CD4-positive, alpha-beta T cell (primary cell): ENCODE measurements at regions of chr1 and their contacts with region 1.

Region 1: GRCh38 chr1:201023517-201023902 is at the start of gene KIF21B:
- DNase-seq: peak; percentile 79 to 95 (median 90)
- ATAC-seq: peak; percentile 78
- H3K4me3 ChIP-seq: peak within 1 kb of the TSS; percentile 67
- H3K4me3 Mint-ChIP-seq: peak within 1 kb of the TSS; percentile 94
- H3K27ac ChIP-seq: peak within 1 kb of the TSS; percentile 80 to 90
- H3K27ac Mint-ChIP-seq: peak within 1 kb of the TSS; percentile 90
- H3K4me1 ChIP-seq: peaks cover 72% of the 10 kb centered on the region
- H3K4me1 Mint-ChIP-seq: peaks cover 77% of the 10 kb centered on the region
- H3K27me3 ChIP-seq: no peaks in the 10 kb centered on the region
- H3K27me3 Mint-ChIP-seq: no peaks in the 10 kb centered on the region
- CTCF ChIP-seq: no peak
- total RNA-seq, gene KIF21B: 64.5 to 65.4 TPM

Region 2: GRCh38 chr1:200620273-200621131 is 403.0 kb before region 1 on chr1 and contains the start of gene KIF14:
- CTCF ChIA-PET with region 1: no interaction called
- POLR2A ChIA-PET with region 1: interaction called, 3 read pairs
- intact Hi-C with region 1: loop called in 1 of 2 experiments (anchors 5 kb)
- DNase-seq: peak; percentile 78 to 95 (median 88)
- ATAC-seq: peak; percentile 95
- H3K4me3 ChIP-seq: peak within 1 kb of the TSS; percentile 83
- H3K4me3 Mint-ChIP-seq: peak within 1 kb of the TSS; percentile 98
- H3K27ac ChIP-seq: peak within 1 kb of the TSS; percentile 23 to 52
- H3K27ac Mint-ChIP-seq: peak within 1 kb of the TSS; percentile 90
- H3K4me1 ChIP-seq: peaks cover 19% of the 10 kb centered on the region
- H3K4me1 Mint-ChIP-seq: peaks cover 31% of the 10 kb centered on the region
- H3K27me3 ChIP-seq: no peaks in the 10 kb centered on the region
- H3K27me3 Mint-ChIP-seq: no peaks in the 10 kb centered on the region
- CTCF ChIP-seq: no peak
- total RNA-seq, gene KIF14: 0.11 TPM

Region 3: GRCh38 chr1:200684015-200684414 is 339.5 kb before region 1 on chr1:
- CTCF ChIA-PET with region 1: no interaction called
- POLR2A ChIA-PET with region 1: no interaction called
- intact Hi-C with region 1: no loop called
- DNase-seq: no peak
- ATAC-seq: no peak
- H3K4me3 ChIP-seq: no peak overlapping the region
- H3K4me3 Mint-ChIP-seq: no peak overlapping the region
- H3K27ac ChIP-seq: no peak overlapping the region
- H3K27ac Mint-ChIP-seq: no peak overlapping the region
- H3K4me1 ChIP-seq: no peaks in the 10 kb centered on the region
- H3K4me1 Mint-ChIP-seq: no peaks in the 10 kb centered on the region
- H3K27me3 ChIP-seq: no peaks in the 10 kb centered on the region
- H3K27me3 Mint-ChIP-seq: peaks cover 4% of the 10 kb centered on the region
- CTCF ChIP-seq: no peak

Region 4: GRCh38 chr1:200738740-200739498 is 284.6 kb before region 1 on chr1 and contains the start of gene CAMSAP2:
- CTCF ChIA-PET with region 1: no interaction called
- POLR2A ChIA-PET with region 1: no interaction called
- intact Hi-C with region 1: loop called in 1 of 2 experiments (anchors 5 kb)
- DNase-seq: peak; percentile 30 to 90 (median 60)
- ATAC-seq: peak; percentile 67
- H3K4me3 ChIP-seq: peak within 1 kb of the TSS; percentile 93
- H3K4me3 Mint-ChIP-seq: peak within 1 kb of the TSS; percentile 100
- H3K27ac ChIP-seq: peak within 1 kb of the TSS; percentile 29 to 36
- H3K27ac Mint-ChIP-seq: peak within 1 kb of the TSS; percentile 90
- H3K4me1 ChIP-seq: peaks cover 17% of the 10 kb centered on the region
- H3K4me1 Mint-ChIP-seq: peaks cover 46% of the 10 kb centered on the region
- H3K27me3 ChIP-seq: no peaks in the 10 kb centered on the region
- H3K27me3 Mint-ChIP-seq: no peaks in the 10 kb centered on the region
- CTCF ChIP-seq: no peak
- total RNA-seq, gene CAMSAP2: 4.4 to 5.7 TPM

Region 5: GRCh38 chr1:201036188-201036842 is 12.8 kb after region 1 on chr1:
- CTCF ChIA-PET with region 1: interaction called, 4 read pairs
- POLR2A ChIA-PET with region 1: interaction called, 22 read pairs
- intact Hi-C with region 1: no loop called
- DNase-seq: no peak
- ATAC-seq: no peak
- H3K4me3 ChIP-seq: no peak overlapping the region
- H3K4me3 Mint-ChIP-seq: no peak overlapping the region
- H3K27ac ChIP-seq: no peak overlapping the region
- H3K27ac Mint-ChIP-seq: no peak overlapping the region
- H3K4me1 ChIP-seq: no peaks in the 10 kb centered on the region
- H3K4me1 Mint-ChIP-seq: no peaks in the 10 kb centered on the region
- H3K27me3 ChIP-seq: no peaks in the 10 kb centered on the region
- H3K27me3 Mint-ChIP-seq: no peaks in the 10 kb centered on the region
- CTCF ChIP-seq: no peak

Region 6: DNA sequence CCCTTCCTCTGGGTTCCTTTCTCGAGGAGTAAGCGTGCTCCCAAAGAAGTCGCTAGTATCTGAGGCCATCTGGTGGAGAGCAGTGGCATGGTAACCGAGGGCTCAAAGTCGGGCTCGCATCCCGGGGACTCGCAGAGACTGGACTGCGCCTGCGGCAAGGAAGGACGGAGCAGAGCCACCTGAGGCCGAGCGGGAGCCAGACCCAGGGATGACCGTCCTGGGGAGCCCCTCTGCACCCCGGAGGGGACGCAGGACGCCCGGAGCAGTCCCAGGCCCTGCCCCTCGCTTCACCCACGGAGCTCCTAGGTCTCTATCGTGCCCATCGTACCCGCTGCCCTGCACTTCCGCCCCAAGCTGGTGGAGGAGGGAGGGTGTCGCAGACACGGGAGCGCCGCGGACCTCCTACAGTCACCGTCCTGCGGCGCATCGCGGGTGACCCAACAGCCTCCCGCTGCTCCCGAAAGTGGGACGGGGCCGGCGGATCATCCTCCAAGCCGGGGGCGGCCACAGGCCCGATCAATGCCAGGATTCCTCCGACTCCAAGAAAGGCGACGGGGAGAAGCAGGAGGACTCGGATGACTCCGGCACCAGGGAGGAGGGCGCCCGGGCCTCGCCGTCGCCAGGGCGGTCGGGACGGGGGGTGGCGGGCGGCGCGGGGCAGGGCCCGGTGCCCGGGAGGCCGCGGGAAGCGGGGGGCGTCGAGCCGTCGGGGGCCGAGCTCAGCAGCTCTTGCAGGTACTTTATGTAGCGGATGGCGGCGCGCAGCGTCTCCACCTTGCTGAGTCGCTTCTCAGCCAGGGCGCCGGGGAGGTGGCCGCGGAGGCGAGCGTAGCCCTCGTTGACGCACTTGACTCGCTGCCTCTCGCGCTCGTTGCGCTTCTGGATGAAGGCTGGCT is 91.0 kb after region 1 on chr1:
- CTCF ChIA-PET with region 1: interaction called, 5 read pairs
- POLR2A ChIA-PET with region 1: interaction called, 8 read pairs
- intact Hi-C with region 1: loop called in 1 of 2 experiments (anchors 10 kb)
- DNase-seq: peak; percentile 45 to 86 (median 64)
- ATAC-seq: peak; percentile 87
- H3K4me3 ChIP-seq: peak overlapping the region; percentile 84
- H3K4me3 Mint-ChIP-seq: peak overlapping the region; percentile 95
- H3K27ac ChIP-seq: peak overlapping the region; percentile 13 to 32
- H3K27ac Mint-ChIP-seq: peak overlapping the region; percentile 76
- H3K4me1 ChIP-seq: peaks cover 16% of the 10 kb centered on the region
- H3K4me1 Mint-ChIP-seq: peaks cover 30% of the 10 kb centered on the region
- H3K27me3 ChIP-seq: no peaks in the 10 kb centered on the region
- H3K27me3 Mint-ChIP-seq: no peaks in the 10 kb centered on the region
- CTCF ChIP-seq: peak; percentile 77